ENCODE measurements at regions of chr10 and their contacts with region 1.

Region 1: DNA sequence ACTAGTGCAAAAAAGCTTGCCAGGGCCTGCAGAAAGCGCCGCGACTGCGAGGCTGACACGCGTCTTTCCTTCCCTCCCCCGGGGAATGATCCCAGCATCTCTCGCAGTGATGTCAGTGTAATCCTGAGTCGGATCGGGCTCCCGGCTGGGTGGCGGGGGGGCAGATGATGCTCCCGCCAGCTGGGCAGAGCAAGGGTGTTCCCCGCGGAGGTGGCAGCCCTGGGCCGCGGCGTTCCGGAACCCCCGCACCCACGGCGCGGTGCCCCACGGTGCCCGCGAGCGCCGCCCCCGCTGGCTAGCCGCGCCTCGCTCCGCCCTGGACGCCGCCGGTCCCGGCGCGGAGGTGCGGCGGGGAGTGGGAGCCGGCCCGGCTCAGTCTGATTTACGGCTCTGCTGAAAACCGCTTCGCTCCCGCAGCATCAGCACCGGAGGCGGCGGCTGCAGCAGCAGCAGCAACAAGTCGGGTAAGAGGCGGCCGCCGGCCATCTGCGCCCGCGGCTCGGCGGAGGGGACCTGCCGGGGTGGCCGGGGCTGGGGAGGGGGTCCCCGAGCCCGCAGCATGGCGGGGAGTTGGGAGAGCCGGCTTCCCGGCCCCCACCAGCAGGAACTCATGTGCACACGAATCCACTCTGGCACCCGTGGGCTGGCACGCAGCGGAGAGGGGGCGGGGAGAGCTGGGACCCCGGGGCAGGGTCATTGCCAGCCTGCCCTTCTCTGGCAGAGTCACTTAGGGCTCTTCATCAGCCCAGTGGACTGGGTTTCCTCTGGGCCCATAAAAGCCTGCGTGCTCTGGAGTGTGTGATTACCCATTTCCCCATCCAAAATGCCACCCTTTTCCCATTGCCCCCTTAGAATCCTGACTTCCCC is at the start of gene ZNF365:
- DNase-seq: peak; percentile 47 to 64 (median 59)
- H3K4me3 ChIP-seq: peak within 1 kb of the TSS; percentile 34 to 54
- H3K4me3 Mint-ChIP-seq: peak within 1 kb of the TSS; percentile 87 to 93 (median 90)
- H3K27ac ChIP-seq: peak within 1 kb of the TSS; percentile 43
- H3K27ac Mint-ChIP-seq: peak within 1 kb of the TSS; percentile 78 to 95 (median 87)
- H3K4me1 ChIP-seq: peaks cover 32% of the 10 kb centered on the region
- H3K4me1 Mint-ChIP-seq: peaks cover 19 to 52% (median 26%) of the 10 kb centered on the region in 4 donors
- H3K27me3 ChIP-seq: no peaks in the 10 kb centered on the region
- H3K27me3 Mint-ChIP-seq: peaks cover 0 to 2% of the 10 kb centered on the region in 2 donors
- total RNA-seq, gene ZNF365: 3.5 to 4.9 TPM

Region 2: DNA sequence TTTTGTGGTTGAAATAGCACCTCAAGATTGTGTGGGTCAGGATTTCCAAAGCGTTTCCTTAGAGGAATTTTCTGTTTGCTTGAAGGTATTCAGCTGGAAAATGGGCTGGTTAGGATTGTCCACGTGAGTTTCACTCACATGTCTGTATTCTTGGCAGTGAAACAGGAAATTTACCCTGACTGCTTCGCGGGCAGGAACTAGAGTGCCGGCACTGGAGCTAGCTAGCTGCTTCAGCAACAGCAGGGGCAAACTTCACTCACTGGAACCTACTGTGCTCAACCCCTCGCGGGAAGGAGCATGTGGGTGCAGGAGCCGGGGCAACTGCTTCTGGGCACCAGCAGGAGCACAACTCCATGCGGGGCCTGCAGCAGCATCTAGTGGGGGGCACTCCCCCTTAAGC is 67.6 kb before region 1 on chr10:
- CTCF ChIA-PET with region 1: no interaction called
- POLR2A ChIA-PET with region 1: no interaction called
- intact Hi-C with region 1: loop called (anchors 5 kb)
- DNase-seq: peak in 3 of 5 donors; percentile 7 to 11 (median 8)
- H3K4me3 ChIP-seq: no peak overlapping the region
- H3K4me3 Mint-ChIP-seq: peak overlapping the region; percentile 11 to 68 (median 38)
- H3K27ac ChIP-seq: no peak overlapping the region
- H3K27ac Mint-ChIP-seq: peak overlapping the region in 3 of 7 donors; percentile 47 to 58 (median 54)
- H3K4me1 ChIP-seq: peaks cover 17% of the 10 kb centered on the region
- H3K4me1 Mint-ChIP-seq: peaks cover 17 to 42% (median 29%) of the 10 kb centered on the region in 4 donors
- H3K27me3 ChIP-seq: no peaks in the 10 kb centered on the region
- H3K27me3 Mint-ChIP-seq: peaks cover 0 to 4% of the 10 kb centered on the region in 2 donors

Region 3: DNA sequence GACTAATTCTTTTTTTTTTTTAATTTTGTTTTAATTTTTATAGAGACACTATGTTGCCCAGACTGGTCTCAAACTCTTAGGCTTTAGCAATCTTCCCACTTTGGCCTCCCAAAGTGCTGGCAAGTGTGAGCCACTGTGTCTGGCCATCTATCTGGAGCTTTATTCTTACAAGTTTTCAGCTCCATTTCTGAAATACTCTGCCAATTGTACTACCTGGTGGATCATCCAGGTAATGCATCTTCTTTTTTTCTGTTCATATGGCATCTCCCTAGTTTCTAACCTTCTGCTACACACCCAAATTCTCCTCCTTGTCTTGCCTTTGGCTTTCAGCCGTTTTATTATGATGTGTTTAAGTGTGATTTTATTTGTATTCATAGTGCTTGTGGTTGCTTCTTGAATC is 40.1 kb after region 1 on chr10:
- CTCF ChIA-PET with region 1: no interaction called
- POLR2A ChIA-PET with region 1: no interaction called
- intact Hi-C with region 1: loop called (anchors 2 kb)
- DNase-seq: no peak
- H3K4me3 ChIP-seq: no peak overlapping the region
- H3K4me3 Mint-ChIP-seq: no peak overlapping the region
- H3K27ac ChIP-seq: no peak overlapping the region
- H3K27ac Mint-ChIP-seq: no peak overlapping the region
- H3K4me1 ChIP-seq: no peaks in the 10 kb centered on the region
- H3K4me1 Mint-ChIP-seq: no peaks in the 10 kb centered on the region
- H3K27me3 ChIP-seq: no peaks in the 10 kb centered on the region
- H3K27me3 Mint-ChIP-seq: peaks cover 2 to 12% of the 10 kb centered on the region in 2 donors

Measured in CD4-positive, alpha-beta memory T cell (primary cell).